ENCODE measurements at regions of chr2 and their contacts with region 1.

Region 1: DNA sequence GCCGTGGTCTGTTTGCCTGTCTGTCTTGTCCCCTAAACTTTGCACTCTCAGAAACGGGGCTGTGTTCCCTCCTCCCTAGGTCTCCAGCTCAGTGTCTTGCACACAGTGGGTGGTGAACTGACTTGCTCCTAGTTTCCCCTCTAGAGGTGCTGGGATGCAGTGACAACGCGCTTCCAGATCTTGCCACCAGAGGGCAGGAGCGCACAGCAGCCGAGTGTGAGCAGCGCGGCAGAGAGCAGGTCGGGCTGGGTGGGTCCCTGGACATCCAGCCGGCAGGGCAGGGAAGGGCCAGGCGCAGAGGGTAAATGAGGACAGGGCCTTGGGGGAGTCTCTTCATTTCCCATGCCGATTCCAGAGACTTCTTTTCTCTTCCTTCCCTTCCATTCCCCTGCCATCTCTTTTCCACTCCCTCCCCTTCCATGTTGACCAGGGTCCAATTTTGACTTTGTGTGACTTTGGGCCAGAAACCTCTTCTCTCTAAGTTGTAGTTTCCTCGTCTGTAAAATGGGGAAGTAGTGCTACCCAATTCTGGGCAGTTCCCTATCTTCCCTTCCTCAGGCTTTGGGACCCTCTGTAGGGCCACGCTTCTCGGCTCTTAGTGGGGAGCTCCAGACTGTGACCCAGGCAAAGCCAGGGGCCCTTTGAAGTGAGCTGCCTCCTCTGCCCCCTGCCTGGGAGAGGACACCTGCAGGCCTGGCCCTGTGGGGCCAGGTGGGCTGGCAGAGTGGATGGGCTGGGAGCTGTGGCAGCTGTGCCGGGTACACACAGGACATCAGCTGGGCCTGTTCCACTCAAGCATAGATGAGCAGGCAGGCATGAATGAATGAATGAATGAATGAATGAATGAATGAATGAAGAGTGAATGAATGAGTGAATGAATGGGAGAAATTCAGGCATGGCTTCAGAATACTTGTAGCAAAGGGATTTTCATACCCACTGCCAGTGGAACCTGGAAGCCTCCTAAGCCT is 43.3 kb upstream of the TAF1B start:
- DNase-seq: peak; percentile 69
- ATAC-seq: peak; percentile 86
- H3K4me3 ChIP-seq: no peak overlapping the region
- H3K27ac ChIP-seq: no peak overlapping the region
- H3K4me1 ChIP-seq: peaks cover 17% of the 10 kb centered on the region
- H3K27me3 ChIP-seq: no peaks in the 10 kb centered on the region; the same call in 1 of the 2 replicates
- CTCF ChIP-seq: peak; percentile 98
- POLR2A ChIP-seq: no peak
- RAD21 ChIP-seq: peak; percentile 95

Region 2: DNA sequence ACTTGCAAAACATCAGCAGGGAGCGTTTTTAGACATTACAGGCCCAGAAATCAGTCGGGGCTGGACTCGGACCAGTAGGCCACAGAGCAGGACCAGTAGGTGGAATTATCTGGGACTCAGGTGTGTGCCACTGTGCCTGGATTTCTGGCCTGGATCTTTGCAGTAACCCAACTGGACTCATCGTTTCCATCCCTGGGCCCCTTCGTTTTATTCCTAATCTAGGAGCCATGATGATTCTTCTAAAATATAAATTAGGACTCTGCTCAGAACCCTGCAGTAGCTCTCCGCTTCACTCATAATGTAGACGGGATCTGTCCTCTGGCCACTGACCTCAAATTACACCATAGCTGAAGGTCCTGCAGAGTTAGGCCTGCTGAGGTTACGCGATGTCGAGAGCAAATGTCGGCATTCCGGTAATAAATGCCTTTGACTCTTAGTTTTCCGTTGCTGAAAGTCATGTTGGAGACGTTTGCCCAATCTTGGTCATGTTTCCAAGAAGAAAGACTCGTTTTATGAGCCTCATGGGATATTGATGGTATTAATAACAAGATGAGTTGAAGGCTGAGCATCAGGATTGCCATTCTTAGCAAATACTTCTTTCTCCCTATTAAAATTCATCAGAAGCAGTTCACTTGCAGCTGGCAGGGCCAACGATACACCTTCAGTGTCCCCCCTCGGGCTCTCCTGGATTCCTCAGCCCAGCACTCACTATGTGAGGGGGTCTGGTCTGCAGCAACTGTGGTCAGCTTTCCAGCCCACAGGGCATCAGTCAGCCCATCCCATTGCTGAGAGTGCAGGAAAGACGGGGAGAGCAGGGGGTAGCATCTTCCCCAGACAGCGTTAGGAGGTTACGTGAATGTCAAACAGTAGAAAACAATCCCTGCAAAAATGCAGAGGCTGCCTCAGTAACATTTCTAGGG is 203.5 kb after region 1 on chr2:
- CTCF ChIA-PET with region 1: no interaction called
- POLR2A ChIA-PET with region 1: no interaction called
- dilution Hi-C with region 1: no loop called
- in situ Hi-C with region 1: no loop called
- intact Hi-C with region 1: no loop called
- DNase-seq: no peak
- ATAC-seq: no peak
- H3K4me3 ChIP-seq: no peak overlapping the region
- H3K27ac ChIP-seq: no peak overlapping the region
- H3K4me1 ChIP-seq: peaks cover 11% of the 10 kb centered on the region
- H3K27me3 ChIP-seq: no peaks in the 10 kb centered on the region
- CTCF ChIP-seq: no peak
- POLR2A ChIP-seq: no peak
- RAD21 ChIP-seq: no peak

Region 3: GRCh38 chr2:10424051-10424450 is 624.1 kb after region 1 on chr2:
- CTCF ChIA-PET with region 1: no interaction called
- POLR2A ChIA-PET with region 1: no interaction called
- dilution Hi-C with region 1: no loop called
- in situ Hi-C with region 1: loop called (anchors 10 kb)
- intact Hi-C with region 1: no loop called
- DNase-seq: peak; percentile 78
- ATAC-seq: peak; percentile 62
- H3K4me3 ChIP-seq: no peak overlapping the region
- H3K27ac ChIP-seq: no peak overlapping the region
- H3K4me1 ChIP-seq: peaks cover 7% of the 10 kb centered on the region; the same call in 1 of the 2 replicates
- H3K27me3 ChIP-seq: no peaks in the 10 kb centered on the region
- CTCF ChIP-seq: no peak
- POLR2A ChIP-seq: no peak
- RAD21 ChIP-seq: no peak

Region 4: GRCh38 chr2:10629819-10630532 is 830.0 kb after region 1 on chr2:
- CTCF ChIA-PET with region 1: no interaction called
- POLR2A ChIA-PET with region 1: no interaction called
- dilution Hi-C with region 1: no loop called
- in situ Hi-C with region 1: no loop called
- intact Hi-C with region 1: no loop called
- DNase-seq: no peak
- ATAC-seq: no peak
- H3K4me3 ChIP-seq: no peak overlapping the region
- H3K27ac ChIP-seq: no peak overlapping the region
- H3K4me1 ChIP-seq: no peaks in the 10 kb centered on the region; the same call in 1 of the 2 replicates
- H3K27me3 ChIP-seq: no peaks in the 10 kb centered on the region
- CTCF ChIP-seq: no peak
- POLR2A ChIP-seq: no peak
- RAD21 ChIP-seq: no peak